GM13976 (cell line): ENCODE measurements at regions of chr6 and their contacts with region 1.

Region 1: DNA sequence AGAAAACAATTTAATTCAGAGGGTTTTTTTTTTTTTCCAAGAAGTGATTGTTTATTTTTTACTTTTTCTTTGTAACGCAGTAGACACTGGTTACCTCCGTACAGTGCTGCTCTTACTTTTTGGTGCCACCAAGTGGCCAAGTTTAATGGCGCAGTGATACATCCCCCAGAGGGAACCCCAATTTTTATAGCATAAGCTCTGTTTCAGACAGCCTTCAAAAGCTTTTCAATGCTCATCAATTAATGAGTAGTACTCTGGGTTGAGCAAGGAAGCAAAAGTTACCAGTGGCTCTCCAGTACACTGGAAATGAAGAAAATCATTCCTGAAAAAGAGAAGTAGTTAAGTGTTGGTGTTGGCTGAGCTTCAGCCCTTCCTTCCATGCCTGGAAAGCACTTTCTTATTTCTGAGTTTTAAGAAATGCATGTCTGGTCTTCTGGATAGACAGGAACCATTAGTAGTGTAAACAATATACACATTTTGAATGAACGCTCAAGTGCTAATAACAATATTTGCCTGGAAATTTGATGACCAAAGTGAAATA is 129.1 kb upstream of the SMLR1 start:
- DNase-seq: peak; percentile 52
- CTCF ChIP-seq: peak; percentile 62

Region 2: GRCh38 chr6:130070792-130071191 is 627.3 kb before region 1 on chr6:
- in situ Hi-C with region 1: loop called (anchors 25 kb)
- DNase-seq: no peak
- CTCF ChIP-seq: no peak

Region 3: GRCh38 chr6:131003488-131004386 is 305.7 kb after region 1 on chr6:
- in situ Hi-C with region 1: no loop called
- DNase-seq: no peak
- CTCF ChIP-seq: no peak